ENCODE measurements at regions of chr2 and their contacts with region 1.

Region 1: DNA sequence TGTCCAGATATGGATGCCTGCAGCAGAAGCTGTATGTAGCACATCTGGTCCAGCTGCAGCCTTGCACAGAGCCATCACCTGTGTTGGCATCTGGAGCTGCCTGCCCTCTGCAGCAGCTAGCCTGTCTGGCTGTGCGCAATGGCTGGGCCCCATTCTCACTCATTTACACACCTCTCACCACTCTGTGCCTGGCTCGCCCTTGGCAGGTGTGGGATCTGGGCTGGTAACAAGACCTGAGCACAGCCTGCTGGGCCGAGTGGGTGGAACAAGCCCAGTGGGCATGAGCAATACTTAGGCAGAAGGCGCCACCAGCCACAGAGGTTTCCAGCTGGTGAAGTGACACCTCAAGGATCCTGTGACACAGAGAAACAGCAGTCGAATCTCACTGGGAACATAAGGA is 714.1 kb downstream of the NUP35 start:
- DNase-seq: no peak
- ATAC-seq: no peak
- H3K4me3 ChIP-seq: no peak overlapping the region
- H3K27ac ChIP-seq: no peak overlapping the region
- H3K4me1 ChIP-seq: no peaks in the 10 kb centered on the region
- H3K27me3 ChIP-seq: no peaks in the 10 kb centered on the region
- CTCF ChIP-seq: no peak
- EP300 ChIP-seq: no peak
- POLR2A ChIP-seq: no peak
- RAD21 ChIP-seq: no peak

Region 2: DNA sequence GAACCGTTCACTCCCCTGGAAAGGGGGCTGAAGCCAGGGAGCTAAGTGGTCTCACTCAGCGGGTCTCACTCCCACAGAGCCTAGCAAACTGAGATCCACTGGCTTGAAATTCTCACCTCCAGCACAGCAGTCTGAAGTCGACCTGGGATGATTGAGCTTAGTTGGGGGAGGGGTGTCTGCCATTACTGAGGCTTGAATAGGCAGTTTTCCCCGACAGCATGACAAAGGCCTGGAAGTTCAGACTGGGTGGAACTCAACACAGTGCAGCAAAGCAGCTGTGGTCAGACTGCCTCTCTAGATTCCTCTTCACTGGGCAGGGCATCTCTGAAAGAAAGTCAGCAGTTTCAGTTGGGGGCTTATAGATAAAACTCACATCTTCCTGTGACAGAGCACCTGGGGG is 421.5 kb before region 1 on chr2:
- CTCF ChIA-PET with region 1: no interaction called
- POLR2A ChIA-PET with region 1: no interaction called
- in situ Hi-C with region 1: no loop called
- intact Hi-C with region 1: no loop called
- DNase-seq: no peak
- ATAC-seq: no peak
- H3K4me3 ChIP-seq: no peak overlapping the region
- H3K27ac ChIP-seq: no peak overlapping the region
- H3K4me1 ChIP-seq: no peaks in the 10 kb centered on the region
- H3K27me3 ChIP-seq: no peaks in the 10 kb centered on the region
- CTCF ChIP-seq: no peak
- EP300 ChIP-seq: no peak
- POLR2A ChIP-seq: no peak
- RAD21 ChIP-seq: no peak

Region 3: DNA sequence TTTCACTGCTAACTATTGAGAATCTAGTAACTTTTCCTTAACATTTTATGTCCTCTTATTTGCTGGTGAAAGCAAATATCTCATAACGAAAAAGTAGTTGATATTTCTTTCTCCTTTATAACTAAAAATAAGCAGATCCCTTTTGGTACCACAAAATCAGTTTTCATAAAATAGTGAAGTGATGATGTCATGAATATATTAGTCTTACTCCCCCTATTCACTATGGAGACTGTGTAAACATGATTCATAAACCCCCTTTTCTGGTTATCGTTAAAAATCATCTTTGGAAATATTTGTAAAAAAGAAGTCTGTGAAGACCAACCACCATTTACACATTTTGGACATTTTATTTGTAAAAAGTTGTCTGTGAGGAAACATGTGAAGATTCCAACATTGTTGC is 20.8 kb after region 1 on chr2:
- CTCF ChIA-PET with region 1: no interaction called
- POLR2A ChIA-PET with region 1: no interaction called
- in situ Hi-C with region 1: no loop called
- intact Hi-C with region 1: loop called (anchors 2 kb)
- DNase-seq: no peak
- ATAC-seq: no peak
- H3K4me3 ChIP-seq: no peak overlapping the region
- H3K27ac ChIP-seq: no peak overlapping the region
- H3K4me1 ChIP-seq: no peaks in the 10 kb centered on the region
- H3K27me3 ChIP-seq: no peaks in the 10 kb centered on the region
- CTCF ChIP-seq: no peak
- EP300 ChIP-seq: no peak
- POLR2A ChIP-seq: no peak
- RAD21 ChIP-seq: no peak